ENCODE measurements at regions of chr19 and their contacts with region 1.

Region 1: DNA sequence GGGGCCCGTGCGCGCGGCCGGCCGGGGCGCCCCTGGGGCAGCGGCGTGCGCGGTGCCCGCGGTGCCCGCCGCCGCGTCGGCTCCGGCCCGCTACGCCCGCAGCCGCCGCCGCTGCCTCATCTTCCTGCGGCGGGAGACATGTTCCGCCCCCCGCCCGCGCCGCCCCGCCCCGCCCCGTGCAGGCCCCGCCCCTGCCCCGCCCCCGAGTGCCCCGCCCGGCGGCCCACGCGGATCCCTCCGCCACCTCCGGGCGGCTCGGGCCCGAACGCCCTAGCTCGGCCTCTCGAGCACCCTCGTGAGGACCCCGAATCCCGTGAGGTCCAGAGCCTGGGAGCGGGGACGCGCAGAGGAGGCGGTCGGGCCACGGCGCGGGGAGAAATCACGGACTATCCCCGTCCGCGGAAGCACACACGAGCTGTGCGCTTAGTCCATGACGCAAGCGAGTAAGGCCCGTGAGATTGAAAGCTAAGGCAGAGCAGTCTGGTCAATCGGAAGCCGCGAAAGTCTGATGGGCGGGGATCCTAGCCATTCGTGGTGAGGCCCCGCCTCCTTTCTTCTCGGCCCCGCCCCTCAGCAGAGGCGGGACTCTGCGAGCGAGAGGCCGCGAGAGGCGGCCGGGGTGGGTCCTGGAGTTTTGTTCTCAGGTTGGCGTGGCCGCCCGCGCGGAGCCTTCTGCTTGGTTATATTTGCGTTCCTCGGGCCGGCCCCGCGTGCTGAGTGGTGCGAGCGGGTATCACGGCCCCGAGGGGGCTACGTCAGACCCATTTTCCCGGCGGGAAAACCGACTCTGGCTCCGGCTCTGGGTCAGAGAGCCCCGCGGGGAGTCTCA is at the start of gene TCF3:
- DNase-seq: peak; percentile 98 to 99 (median 98)
- H3K4me3 ChIP-seq: peak within 1 kb of the TSS in 3 of 4 donors; percentile 18 to 96 (median 62)
- H3K27ac ChIP-seq: peak within 1 kb of the TSS; percentile 98 to 100 (median 99)
- H3K4me1 ChIP-seq: peaks cover 10 to 13% of the 10 kb centered on the region in 2 donors
- H3K27me3 ChIP-seq: no peaks in the 10 kb centered on the region
- CTCF ChIP-seq: peak in 1 of 6 experiments; percentile 28
- POLR2A ChIP-seq: peak; percentile 44 to 60
- total RNA-seq, gene TCF3: 15.7 to 96.0 (median 39.9) TPM

Region 2: GRCh38 chr19:1540365-1540925 is 112.2 kb before region 1 on chr19:
- intact Hi-C with region 1: loop called in 1 of 2 experiments (anchors 10 kb)
- DNase-seq: no peak
- H3K4me3 ChIP-seq: no peak overlapping the region
- H3K27ac ChIP-seq: no peak overlapping the region
- H3K4me1 ChIP-seq: no peaks in the 10 kb centered on the region
- H3K27me3 ChIP-seq: peaks cover 3% of the 10 kb centered on the region
- CTCF ChIP-seq: no peak
- POLR2A ChIP-seq: no peak

Region 3: DNA sequence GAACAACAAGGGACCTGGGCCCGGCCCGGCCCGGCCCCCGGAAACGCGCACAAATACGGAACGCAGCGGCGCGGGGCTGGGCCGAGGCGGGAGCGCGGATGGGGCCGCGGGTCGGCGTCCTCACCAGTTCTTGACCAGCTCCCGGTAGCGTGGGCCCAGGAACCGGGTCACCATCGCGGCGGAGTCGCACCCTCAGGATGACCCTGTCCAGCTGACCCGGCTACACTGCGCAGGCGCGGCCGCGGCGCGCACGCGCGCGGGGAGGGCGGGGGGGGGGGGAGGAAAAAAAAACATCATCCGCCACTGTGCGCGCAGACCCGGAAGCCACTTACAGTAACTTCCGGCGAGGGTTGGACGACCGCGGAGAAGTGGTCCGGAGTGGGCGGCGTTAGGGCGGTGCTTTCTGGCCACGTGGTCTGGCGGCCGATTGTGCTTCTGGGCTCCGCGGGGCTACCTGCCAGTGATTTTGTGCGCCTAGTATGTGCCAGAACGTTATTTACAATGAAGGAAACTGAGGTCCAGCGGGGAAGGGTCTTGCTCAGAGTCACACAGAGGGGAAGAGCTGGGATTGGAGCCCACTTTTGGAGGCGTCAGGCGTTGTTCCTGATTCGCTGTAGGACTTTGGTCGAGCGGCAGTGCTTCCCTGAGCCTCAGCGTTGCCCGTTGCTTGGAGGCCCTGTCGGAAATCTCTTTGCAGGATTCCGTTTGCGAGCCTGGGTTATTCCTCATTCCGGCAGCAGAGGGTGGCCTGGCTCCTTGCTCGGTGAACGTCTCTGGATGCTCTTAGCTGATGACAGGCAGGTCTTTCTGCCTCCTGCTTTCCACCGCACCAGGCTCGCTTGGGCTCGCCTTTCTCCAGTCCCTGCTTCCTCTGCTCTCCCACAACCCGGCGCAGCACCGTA is 47.2 kb before region 1 on chr19 and contains the start of gene UQCR11:
- intact Hi-C with region 1: loop called (anchors 5 kb)
- DNase-seq: peak; percentile 93 to 98 (median 96)
- H3K4me3 ChIP-seq: peak within 1 kb of the TSS in 3 of 4 donors; percentile 70 to 95 (median 79)
- H3K27ac ChIP-seq: peak within 1 kb of the TSS; percentile 71 to 95 (median 92)
- H3K4me1 ChIP-seq: peaks cover 19 to 28% of the 10 kb centered on the region in 2 donors
- H3K27me3 ChIP-seq: no peaks in the 10 kb centered on the region
- CTCF ChIP-seq: peak; percentile 15 to 77 (median 66)
- POLR2A ChIP-seq: peak in 1 of 2 donors; percentile 55
- total RNA-seq, gene UQCR11: 47.1 to 336 (median 267) TPM

Region 4: GRCh38 chr19:1624458-1624857 is 28.2 kb before region 1 on chr19:
- intact Hi-C with region 1: no loop called
- DNase-seq: peak in 5 of 7 donors; percentile 44 to 70 (median 54)
- H3K4me3 ChIP-seq: no peak overlapping the region
- H3K27ac ChIP-seq: no peak overlapping the region
- H3K4me1 ChIP-seq: no peaks in the 10 kb centered on the region
- H3K27me3 ChIP-seq: no peaks in the 10 kb centered on the region
- CTCF ChIP-seq: peak; percentile 23 to 56 (median 42)
- POLR2A ChIP-seq: no peak

Region 5: DNA sequence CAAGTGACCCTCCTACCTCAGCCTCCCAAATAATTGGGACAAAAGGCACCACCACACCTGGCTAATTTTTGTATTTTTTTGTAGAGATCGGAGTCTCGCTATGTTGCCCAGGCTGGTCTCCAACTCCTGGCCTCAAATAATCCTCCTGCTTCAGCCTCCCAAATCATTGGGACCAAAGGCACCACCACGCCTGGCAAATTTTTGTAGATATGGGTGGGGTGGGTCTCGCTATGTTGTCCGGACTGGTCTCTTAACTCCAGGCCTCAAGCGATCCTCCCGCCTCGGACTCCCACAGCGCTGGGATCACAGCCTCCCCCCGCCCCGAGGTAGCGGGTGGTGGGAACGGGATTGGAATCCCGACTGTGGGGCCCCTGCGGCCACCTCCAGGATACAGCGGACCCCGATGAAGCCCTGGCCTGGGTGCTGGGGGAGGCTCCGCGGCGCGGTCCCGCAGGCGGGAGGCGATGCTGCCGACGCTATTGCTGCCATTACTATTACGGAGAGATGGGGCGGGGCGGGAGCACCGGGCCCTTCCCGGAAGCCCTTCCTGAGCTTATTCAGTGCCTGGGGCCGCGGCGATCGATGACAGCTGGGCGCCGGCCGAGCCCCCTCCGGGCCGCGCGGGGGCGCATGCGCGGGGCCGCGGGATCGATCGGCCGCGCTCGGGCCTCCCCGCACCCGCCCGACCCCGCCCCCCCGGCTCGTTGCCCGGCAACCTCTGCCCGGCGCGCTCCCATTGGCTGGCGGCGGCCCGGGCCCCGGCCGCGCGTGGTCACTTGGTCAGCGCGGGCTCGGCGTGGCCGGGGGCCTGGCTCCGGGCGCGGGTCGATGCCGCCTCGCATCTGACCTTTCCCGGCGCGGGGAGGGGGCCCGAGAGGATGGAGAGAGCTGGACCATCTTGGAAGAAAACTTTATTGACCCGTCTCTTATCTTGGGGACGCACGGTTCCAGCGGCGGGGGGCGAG is 72.7 kb after region 1 on chr19:
- intact Hi-C with region 1: no loop called
- DNase-seq: peak; percentile 31 to 74 (median 52)
- H3K4me3 ChIP-seq: peak overlapping the region in 2 of 4 donors; percentile 4 to 69
- H3K27ac ChIP-seq: no peak overlapping the region
- H3K4me1 ChIP-seq: peaks cover 0 to 6% of the 10 kb centered on the region in 2 donors
- H3K27me3 ChIP-seq: peaks cover 29% of the 10 kb centered on the region
- CTCF ChIP-seq: no peak
- POLR2A ChIP-seq: no peak